Mucosa of descending colon (tissue), 3 donors: ENCODE measurements at regions of chr13 and their contacts with region 1.

Region 1: DNA sequence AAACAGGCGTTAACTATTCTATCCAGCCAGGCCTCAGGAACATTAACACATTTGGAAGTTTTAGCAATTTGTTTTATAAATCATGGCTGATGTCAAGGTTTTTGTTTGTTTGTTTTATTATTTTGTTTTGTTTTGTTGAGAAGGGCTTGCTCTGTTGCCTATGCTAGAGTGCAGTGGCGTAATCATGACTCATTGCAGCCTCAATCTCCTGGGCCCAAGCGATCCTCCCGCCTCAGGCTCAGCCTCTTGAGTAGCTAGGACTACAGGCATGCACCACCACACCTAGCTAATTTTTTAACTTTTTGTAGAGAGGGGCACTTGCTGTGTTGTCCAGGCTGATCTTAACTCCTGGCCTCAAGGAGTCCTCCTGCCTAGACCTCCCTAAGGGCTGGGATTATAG is 28.3 kb downstream of the NUP58 start:
- DNase-seq: no peak
- ATAC-seq: no peak
- H3K4me3 ChIP-seq: no peak overlapping the region
- H3K4me1 ChIP-seq: no peaks in the 10 kb centered on the region
- CTCF ChIP-seq: no peak

Region 2: GRCh38 chr13:25266706-25267105 is 63.0 kb before region 1 on chr13:
- intact Hi-C with region 1: loop called in 1 of 2 experiments (anchors 2 kb)
- DNase-seq: no peak
- ATAC-seq: no peak
- H3K4me3 ChIP-seq: no peak overlapping the region
- H3K4me1 ChIP-seq: no peaks in the 10 kb centered on the region
- CTCF ChIP-seq: no peak